ENCODE measurements at regions of chr15 and their contacts with region 1.

Region 1: DNA sequence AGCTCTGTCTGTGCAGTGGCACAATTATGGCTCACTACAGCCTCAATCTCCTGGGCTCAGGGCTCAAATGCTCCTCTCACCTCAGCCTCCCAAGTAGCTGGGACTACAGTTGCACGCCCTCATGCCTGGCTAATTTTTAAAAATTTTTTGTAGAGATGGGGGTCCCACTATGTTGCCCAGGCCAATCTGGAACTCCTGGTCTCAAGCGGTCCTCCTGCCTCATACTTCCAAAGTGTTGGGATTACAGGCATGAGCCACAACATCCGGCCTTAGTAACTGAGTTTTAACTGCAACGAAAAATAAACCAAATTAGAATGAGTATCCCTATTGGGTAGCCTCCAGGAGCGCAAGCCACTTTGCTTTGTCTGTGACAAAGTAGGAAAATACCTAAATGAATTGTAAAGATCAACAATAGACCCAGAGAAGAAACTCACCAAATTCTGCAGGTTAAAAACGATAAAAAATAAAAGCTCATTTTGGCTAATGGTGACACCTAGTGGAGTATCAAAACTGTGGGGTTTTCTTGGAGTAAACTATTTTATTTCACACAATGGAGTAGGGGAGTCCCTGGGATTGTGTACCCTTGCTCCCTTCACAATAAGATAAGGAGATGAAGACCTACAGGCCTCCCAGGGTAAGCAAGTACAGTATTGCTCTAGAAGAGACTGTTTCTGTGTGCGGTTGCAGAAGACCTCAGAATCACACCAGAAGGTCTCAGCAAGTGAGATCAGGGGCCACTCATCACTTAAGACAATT is 21.0 kb upstream of the CA12 start:
- DNase-seq: no peak

Region 2: DNA sequence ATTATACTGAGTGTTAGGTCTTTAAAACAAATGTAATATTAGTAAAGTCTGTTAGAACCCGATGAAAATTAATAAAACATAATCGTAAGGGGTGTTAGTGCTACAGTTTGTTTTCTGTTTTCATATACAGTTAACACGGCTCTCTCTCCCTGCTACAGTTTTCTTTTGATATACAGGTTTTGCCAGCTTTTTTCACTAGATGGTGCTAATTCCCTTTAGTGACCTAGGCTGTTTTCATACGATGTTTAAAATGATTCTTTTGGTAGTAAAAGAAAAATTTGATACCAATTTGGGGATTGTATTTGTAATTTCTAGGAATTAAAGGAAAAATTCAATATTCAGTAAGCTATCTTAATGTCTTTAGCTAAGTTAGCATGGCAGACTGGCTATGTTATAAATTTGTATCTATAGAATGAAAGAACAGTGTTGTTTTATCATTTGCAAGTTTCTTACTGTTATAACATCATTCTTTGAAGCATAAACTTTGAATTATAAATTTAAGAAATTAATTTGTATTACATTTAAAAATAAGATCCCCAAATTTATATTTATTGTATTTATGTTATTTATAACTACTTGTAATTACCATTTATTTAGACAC is 113.8 kb before region 1 on chr15:
- intact Hi-C with region 1: loop called (anchors 2 to 5 kb)
- DNase-seq: no peak